Ovary (tissue), 10 donors: ENCODE measurements at regions of chr17 and their contacts with region 1.

Region 1: GRCh38 chr17:50865984-50866774 is at the start of gene TOB1:
- DNase-seq: peak; percentile 98 to 99 (median 98)
- H3K4me3 ChIP-seq: peak within 1 kb of the TSS; percentile 99
- H3K27ac ChIP-seq: peak within 1 kb of the TSS; percentile 98
- H3K4me1 ChIP-seq: peaks cover 2% of the 10 kb centered on the region
- H3K27me3 ChIP-seq: no peaks in the 10 kb centered on the region
- CTCF ChIP-seq: no peak
- EP300 ChIP-seq: peak; percentile 35
- POLR2A ChIP-seq: peak; percentile 99
- total RNA-seq, gene TOB1: 28.6 to 150 (median 79.2) TPM

Region 2: GRCh38 chr17:50904521-50905459 is 38.6 kb after region 1 on chr17:
- intact Hi-C with region 1: loop called in 1 of 4 experiments (anchors 5 kb)
- DNase-seq: peak; percentile 50 to 83 (median 70)
- H3K4me3 ChIP-seq: no peak overlapping the region
- H3K27ac ChIP-seq: peak overlapping the region; percentile 64 to 66
- H3K4me1 ChIP-seq: peaks cover 6% of the 10 kb centered on the region
- H3K27me3 ChIP-seq: no peaks in the 10 kb centered on the region
- CTCF ChIP-seq: no peak
- EP300 ChIP-seq: no peak
- POLR2A ChIP-seq: no peak

Region 3: DNA sequence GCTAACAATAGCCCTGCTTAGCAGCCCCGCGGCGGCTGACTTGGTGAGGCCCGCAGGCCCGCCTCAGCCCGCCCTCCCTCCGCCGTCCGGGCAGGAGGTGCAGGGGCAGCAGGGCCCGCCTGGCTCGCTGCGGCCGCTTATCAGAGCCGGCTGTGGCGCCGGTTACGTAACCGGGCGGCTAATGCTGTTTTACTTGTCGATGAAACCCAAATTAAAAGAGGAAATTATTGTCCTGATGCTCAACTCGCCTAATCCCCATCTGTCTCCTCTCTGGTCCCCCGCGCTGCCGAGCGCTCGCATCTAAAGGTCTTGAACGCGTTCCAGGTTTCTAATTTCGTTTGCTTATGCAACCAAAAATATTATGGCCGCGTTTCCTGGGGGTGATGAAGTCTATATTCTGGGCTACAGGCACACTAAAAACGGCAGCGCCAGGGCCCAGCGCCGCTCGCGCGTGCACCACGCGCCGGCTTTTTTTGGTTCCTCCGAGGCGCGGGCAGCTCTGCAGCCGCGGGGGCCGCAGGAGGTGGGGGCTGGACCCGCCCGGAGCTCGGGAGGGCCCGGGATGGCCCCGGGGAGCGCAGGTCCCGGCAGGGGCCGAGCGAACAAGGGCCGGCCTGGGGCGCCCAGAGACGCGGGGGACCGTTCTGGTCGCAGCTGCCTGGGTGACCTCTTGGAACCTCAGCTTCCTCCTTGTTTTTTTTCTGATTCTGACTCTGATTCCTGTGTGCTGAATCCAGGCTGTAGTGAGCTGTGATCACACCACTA is 65.1 kb after region 1 on chr17:
- intact Hi-C with region 1: loop called in 2 of 4 experiments (anchors 5 kb)
- DNase-seq: peak; percentile 82 to 89 (median 84)
- H3K4me3 ChIP-seq: peak overlapping the region; percentile 42
- H3K27ac ChIP-seq: peak overlapping the region; percentile 85 to 96
- H3K4me1 ChIP-seq: peaks cover 2% of the 10 kb centered on the region
- H3K27me3 ChIP-seq: no peaks in the 10 kb centered on the region
- CTCF ChIP-seq: no peak
- EP300 ChIP-seq: no peak
- POLR2A ChIP-seq: peak; percentile 33

Region 4: GRCh38 chr17:50949989-50950881 is 84.1 kb after region 1 on chr17:
- intact Hi-C with region 1: loop called in 2 of 4 experiments (anchors 5 kb)
- DNase-seq: peak; percentile 78 to 87 (median 79)
- H3K4me3 ChIP-seq: no peak overlapping the region
- H3K27ac ChIP-seq: peak overlapping the region; percentile 59 to 63
- H3K4me1 ChIP-seq: peaks cover 26% of the 10 kb centered on the region
- H3K27me3 ChIP-seq: no peaks in the 10 kb centered on the region
- CTCF ChIP-seq: peak; percentile 16 to 74 (median 53)
- EP300 ChIP-seq: peak; percentile 60
- POLR2A ChIP-seq: no peak

Region 5: DNA sequence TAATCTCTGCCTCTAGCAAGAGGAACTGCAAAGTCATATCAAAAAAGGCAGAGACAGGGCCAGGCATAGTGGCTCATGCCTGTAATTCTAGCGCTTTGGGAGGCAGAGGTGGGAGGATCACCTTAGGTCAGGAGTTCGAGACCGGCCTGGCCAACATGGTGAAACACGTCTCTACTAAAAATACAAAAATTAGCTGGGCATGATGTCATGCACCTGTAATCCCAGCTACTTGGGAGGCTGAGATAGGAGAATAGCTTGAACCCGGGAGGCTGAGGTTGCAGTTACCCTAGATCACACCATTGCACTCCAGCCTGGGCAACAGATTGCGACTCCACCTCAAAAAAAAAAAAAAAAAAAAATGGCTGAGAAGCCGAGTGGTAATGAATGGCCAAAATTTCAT is 1980.1 kb after region 1 on chr17:
- intact Hi-C with region 1: no loop called
- DNase-seq: no peak
- H3K4me3 ChIP-seq: no peak overlapping the region
- H3K27ac ChIP-seq: no peak overlapping the region
- H3K4me1 ChIP-seq: no peaks in the 10 kb centered on the region
- H3K27me3 ChIP-seq: no peaks in the 10 kb centered on the region
- CTCF ChIP-seq: no peak
- EP300 ChIP-seq: no peak
- POLR2A ChIP-seq: no peak